Psoas muscle (tissue), 8 donors: ENCODE measurements at regions of chr12 and their contacts with region 1.

Region 1: DNA sequence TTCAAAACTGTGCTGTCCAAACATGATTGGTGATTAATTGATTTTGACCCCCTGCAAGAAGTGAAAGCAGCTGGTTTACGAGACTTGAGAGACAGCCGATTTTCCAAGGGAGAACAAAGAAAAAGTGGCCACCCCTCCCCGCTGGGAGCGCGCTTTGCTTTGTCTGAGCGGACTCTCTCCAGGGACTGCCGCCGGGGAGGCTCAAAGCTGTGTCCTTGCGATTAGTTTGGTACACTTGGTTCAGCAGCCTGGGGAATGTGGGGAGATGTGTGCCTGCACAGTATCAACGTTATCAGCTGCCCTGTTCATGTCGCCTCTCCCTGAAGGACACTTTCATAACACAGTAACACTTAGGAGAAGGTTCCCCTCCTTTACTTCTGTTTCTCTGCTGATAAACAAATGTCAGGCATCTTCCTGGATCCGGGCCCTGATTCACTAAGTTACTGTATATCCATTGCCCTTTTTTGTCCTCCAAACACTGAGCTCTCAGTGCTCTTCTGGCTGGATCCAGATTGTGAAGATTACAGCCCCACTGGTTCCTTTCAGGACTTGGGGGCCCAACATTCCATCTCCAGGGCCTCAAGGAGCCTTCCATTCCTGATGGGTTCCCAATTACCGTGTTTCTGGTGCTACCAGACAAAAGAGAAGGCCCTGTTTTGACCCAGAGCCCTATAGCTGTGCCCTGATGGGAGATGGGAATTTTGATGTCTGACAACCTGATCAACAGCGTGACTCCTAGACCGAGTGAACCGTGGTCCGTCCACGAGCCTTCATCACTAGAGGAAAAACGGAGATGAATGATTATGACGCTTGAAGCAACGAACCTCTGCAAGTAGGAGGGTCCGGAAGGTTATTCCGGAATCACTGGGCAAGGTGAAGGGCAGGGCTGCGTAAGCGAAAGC is 31.7 kb upstream of the TUBA1C start:
- DNase-seq: peak; percentile 37 to 56
- ATAC-seq: peak in 2 of 4 donors; percentile 17 to 22
- H3K4me3 ChIP-seq: peak overlapping the region; percentile 19
- H3K27ac ChIP-seq: peak overlapping the region; percentile 82
- H3K4me1 ChIP-seq: peaks cover 3% of the 10 kb centered on the region
- H3K27me3 ChIP-seq: no peaks in the 10 kb centered on the region
- CTCF ChIP-seq: no peak

Region 2: DNA sequence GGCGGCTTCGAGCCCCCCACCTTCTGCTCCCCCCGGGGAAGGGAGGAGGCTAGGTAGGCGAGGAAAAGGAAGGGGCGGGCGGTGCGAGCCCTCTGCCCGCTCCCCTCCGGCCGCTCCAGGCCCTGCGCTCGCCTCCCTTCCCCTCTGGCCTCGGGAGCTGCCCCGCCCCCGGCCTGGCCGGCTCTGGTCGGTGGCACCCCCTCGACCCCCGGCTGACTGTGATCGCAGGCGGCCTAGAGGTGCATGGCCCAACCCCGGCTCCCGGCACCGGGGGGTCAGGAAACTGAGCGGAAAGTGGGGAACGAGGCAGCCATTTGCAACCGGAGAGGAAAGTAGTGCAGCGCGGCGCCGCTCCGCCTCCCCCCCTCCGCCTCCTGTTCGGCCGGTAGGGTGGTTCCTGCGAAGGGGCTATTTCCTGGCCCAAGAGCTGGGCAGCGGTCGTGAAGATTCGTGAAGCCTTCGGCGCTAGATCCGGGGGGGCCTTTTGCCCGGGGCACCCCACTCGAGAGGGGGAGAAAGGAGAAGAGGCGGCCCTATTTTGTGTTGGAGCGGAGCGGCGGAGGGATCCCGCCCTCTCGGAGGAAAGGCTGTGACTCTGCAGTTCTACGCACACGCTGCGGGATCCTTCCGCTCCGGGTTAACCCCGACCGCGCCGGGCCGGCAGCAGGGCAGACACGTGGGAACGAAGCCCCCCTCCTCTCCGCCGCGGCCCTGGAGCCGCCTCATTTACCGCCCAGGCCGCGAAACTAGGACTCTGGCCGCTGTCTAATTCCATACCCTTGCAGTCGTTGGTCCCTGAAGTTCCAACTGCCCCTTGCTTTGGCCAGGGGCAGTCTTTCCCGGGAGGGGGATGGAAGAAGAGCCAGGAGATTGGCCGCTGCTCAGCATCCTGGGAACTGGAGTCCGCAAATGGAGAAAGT is 172.7 kb before region 1 on chr12 and contains the start of gene KMT2D:
- intact Hi-C with region 1: loop called (anchors 2 to 10 kb)
- DNase-seq: peak; percentile 94 to 97
- ATAC-seq: peak; percentile 88 to 91 (median 90)
- H3K4me3 ChIP-seq: peak within 1 kb of the TSS; percentile 99
- H3K27ac ChIP-seq: peak within 1 kb of the TSS; percentile 95
- H3K4me1 ChIP-seq: peaks cover 30% of the 10 kb centered on the region
- H3K27me3 ChIP-seq: no peaks in the 10 kb centered on the region
- CTCF ChIP-seq: peak; percentile 25
- total RNA-seq, gene KMT2D: 62.6 to 69.8 (median 65.1) TPM

Region 3: GRCh38 chr12:49069507-49070346 is 163.5 kb before region 1 on chr12 and contains the start of gene RHEBL1:
- intact Hi-C with region 1: loop called (anchors 2 to 10 kb)
- DNase-seq: peak; percentile 99
- ATAC-seq: peak; percentile 100
- H3K4me3 ChIP-seq: peak within 1 kb of the TSS; percentile 85
- H3K27ac ChIP-seq: peak within 1 kb of the TSS; percentile 70
- H3K4me1 ChIP-seq: peaks cover 10% of the 10 kb centered on the region
- H3K27me3 ChIP-seq: no peaks in the 10 kb centered on the region
- CTCF ChIP-seq: no peak
- total RNA-seq, gene RHEBL1: 0.97 TPM in 1 of 4 donors, not detected in the others

Region 4: GRCh38 chr12:49088190-49088931 is 144.8 kb before region 1 on chr12:
- intact Hi-C with region 1: loop called in 1 of 2 experiments (anchors 5 kb)
- DNase-seq: peak; percentile 67 to 83
- ATAC-seq: peak; percentile 93 to 95 (median 94)
- H3K4me3 ChIP-seq: no peak overlapping the region
- H3K27ac ChIP-seq: no peak overlapping the region
- H3K4me1 ChIP-seq: peaks cover 9% of the 10 kb centered on the region
- H3K27me3 ChIP-seq: peaks cover 0 to 37% (median 20%) of the 10 kb centered on the region in 3 donors
- CTCF ChIP-seq: peak; percentile 88

Region 5: GRCh38 chr12:49130151-49131050 is 102.8 kb before region 1 on chr12:
- intact Hi-C with region 1: loop called in 1 of 2 experiments (anchors 2 kb)
- DNase-seq: peak; percentile 94 to 96
- ATAC-seq: peak; percentile 81 to 90 (median 83)
- H3K4me3 ChIP-seq: peak overlapping the region; percentile 89
- H3K27ac ChIP-seq: peak overlapping the region; percentile 97
- H3K4me1 ChIP-seq: peaks cover 16% of the 10 kb centered on the region
- H3K27me3 ChIP-seq: no peaks in the 10 kb centered on the region
- CTCF ChIP-seq: peak; percentile 79

Region 6: DNA sequence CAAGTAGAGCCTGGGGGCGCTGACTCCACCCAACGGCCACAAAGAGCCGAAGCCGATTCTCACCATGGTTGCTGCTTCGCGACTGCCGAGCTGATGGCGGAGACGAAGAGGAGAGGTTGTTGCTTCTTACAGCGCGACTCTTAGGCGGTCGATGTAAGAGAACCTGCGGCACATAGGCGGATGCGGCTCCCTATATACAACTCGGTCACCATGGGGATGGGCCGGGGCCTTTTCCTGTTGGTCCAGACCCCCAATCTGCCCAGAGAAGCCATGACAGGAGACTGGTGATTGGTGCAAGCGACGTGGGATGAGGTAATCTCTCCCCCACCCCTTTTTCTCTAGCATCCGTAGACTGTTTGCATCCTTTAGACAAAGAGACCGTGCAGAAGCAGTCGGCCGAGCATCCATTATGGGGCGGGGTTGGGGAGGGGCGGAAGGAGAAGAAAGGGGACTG is 44.2 kb before region 1 on chr12 and contains the start of gene TUBA1A:
- intact Hi-C with region 1: loop called in 1 of 2 experiments (anchors 5 kb)
- DNase-seq: peak; percentile 86 to 91
- ATAC-seq: peak; percentile 80 to 87 (median 84)
- H3K4me3 ChIP-seq: peak within 1 kb of the TSS; percentile 91
- H3K27ac ChIP-seq: peak within 1 kb of the TSS; percentile 86
- H3K4me1 ChIP-seq: peaks cover 9% of the 10 kb centered on the region
- H3K27me3 ChIP-seq: peaks cover 0 to 26% (median 3%) of the 10 kb centered on the region in 3 donors
- CTCF ChIP-seq: no peak
- total RNA-seq, gene TUBA1A: 21.3 to 29.8 (median 29.0) TPM